ENCODE measurements at regions of chr5 and their contacts with region 1.

Region 1: GRCh38 chr5:143341807-143342570 is 61.5 kb downstream of the NR3C1 start:
- DNase-seq: peak; percentile 21
- H3K4me3 Mint-ChIP-seq: peak overlapping the region; percentile 6
- H3K27ac Mint-ChIP-seq: peak overlapping the region; percentile 72
- H3K4me1 Mint-ChIP-seq: peaks cover 51% of the 10 kb centered on the region
- H3K27me3 Mint-ChIP-seq: no peaks in the 10 kb centered on the region

Region 2: GRCh38 chr5:143319437-143320227 is 22.4 kb before region 1 on chr5:
- CTCF ChIA-PET with region 1: no interaction called
- intact Hi-C with region 1: loop called (anchors 2 kb)
- DNase-seq: no peak
- H3K4me3 Mint-ChIP-seq: no peak overlapping the region
- H3K27ac Mint-ChIP-seq: no peak overlapping the region
- H3K4me1 Mint-ChIP-seq: peaks cover 60% of the 10 kb centered on the region
- H3K27me3 Mint-ChIP-seq: no peaks in the 10 kb centered on the region